Activated B cell treated with CpG ODN at 0.5 μM for 24 hours (primary cell): ENCODE measurements at regions of chr1 and their contacts with region 1.

Region 1: DNA sequence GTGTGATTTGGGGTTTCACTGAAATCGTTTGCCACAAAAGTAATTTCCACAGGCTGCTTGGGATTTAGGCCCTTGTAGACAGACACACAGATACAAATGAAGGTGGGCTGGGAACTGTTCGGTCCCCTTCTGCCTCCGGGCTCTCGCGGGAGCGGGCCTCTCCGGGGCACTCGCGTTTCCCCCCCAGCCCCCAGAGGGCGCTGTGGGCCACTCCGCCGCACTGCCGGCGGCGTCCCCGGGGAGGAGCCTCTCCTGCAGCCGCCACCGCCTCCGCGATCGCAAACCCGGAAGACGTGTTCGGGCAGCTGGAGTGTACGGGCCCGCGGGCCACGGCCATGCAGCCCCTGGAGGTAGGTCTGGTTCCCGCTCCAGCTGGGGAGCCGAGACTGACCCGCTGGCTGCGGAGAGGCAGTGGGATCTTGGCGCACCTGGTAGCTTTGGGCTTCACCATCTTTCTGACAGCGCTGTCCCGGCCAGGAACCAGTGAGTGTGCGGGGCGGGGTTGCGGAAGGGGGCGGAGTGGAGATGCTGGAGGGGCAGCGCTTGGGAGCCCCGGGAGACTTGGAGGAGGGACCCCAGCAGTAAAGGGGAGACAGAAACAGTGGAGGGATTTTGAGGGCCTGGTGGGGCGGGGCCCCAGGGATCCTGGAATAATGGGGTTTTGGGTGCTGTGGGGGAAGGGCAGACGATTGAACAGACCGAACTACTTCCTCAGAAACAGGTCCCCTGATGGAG is at the start of gene CYB561D1:
- DNase-seq: peak; percentile 95
- ATAC-seq: peak; percentile 89
- H3K4me3 Mint-ChIP-seq: peak within 1 kb of the TSS; percentile 98
- H3K27ac Mint-ChIP-seq: peak within 1 kb of the TSS; percentile 91
- H3K4me1 Mint-ChIP-seq: peaks cover 43% of the 10 kb centered on the region
- H3K27me3 Mint-ChIP-seq: no peaks in the 10 kb centered on the region
- CTCF ChIP-seq: peak; percentile 81
- total RNA-seq, gene CYB561D1: 17.1 and 18.1 TPM in 2 replicates

Region 2: DNA sequence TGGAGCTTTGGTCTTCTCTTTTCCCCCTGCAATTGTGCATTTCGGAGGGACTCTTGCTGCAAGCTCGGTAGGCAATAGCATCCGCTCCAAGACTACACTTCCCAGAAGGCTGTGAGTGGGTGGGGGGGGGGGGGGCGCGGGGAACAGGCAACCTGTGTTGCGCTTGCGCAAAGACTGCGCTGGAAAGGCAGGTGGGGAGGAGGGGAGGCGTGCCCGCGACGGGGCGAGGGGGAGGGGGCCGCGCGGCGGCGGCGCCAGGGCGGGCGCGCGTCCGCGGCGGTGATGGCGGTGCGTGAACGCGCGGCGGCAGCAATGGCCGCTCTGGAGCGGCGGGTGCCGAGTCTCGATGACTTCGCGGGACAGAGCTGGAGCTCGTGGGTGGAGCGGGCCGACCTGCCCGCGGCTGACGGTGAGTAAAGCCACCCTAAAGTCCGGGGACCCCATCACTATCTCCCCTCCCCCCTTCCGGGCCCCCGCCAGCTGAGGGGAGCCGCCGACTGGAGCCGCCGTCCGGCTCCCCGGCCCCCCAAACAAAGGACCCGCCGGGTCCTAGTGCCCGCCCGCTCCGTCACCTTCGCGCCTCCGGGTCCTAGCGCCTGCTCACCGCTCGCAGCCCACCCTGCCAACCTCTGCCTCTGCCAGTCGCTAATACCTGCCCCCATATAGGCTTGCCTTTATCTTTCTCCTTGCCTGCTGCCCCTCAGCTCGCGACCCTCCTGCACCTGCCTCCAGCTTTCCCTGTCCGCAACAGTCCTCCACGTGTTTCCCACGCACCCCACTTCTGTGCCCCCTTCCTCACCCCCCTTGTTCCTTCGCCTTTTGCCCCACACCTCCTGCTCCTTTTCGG is 10.1 kb before region 1 on chr1 and contains the start of gene ATXN7L2:
- CTCF ChIA-PET with region 1: interaction called, 31 read pairs
- POLR2A ChIA-PET with region 1: interaction called, 29 read pairs
- intact Hi-C with region 1: loop called (anchors 1 kb)
- DNase-seq: peak; percentile 90
- ATAC-seq: peak; percentile 79
- H3K4me3 Mint-ChIP-seq: peak within 1 kb of the TSS; percentile 94
- H3K27ac Mint-ChIP-seq: peak within 1 kb of the TSS; percentile 91
- H3K4me1 Mint-ChIP-seq: peaks cover 27% of the 10 kb centered on the region
- H3K27me3 Mint-ChIP-seq: peaks cover 16% of the 10 kb centered on the region
- CTCF ChIP-seq: no peak
- total RNA-seq, gene ATXN7L2: 7.5 and 9.0 TPM in 2 replicates

Region 3: GRCh38 chr1:109509176-109510134 is 15.5 kb after region 1 on chr1 and contains the start of gene AMIGO1:
- CTCF ChIA-PET with region 1: interaction called, 7 read pairs
- POLR2A ChIA-PET with region 1: interaction called, 11 read pairs
- intact Hi-C with region 1: loop called (anchors 1 kb)
- DNase-seq: peak; percentile 63
- ATAC-seq: peak; percentile 80
- H3K4me3 Mint-ChIP-seq: peak within 1 kb of the TSS; percentile 87
- H3K27ac Mint-ChIP-seq: peak within 1 kb of the TSS; percentile 43
- H3K4me1 Mint-ChIP-seq: peaks cover 15% of the 10 kb centered on the region
- H3K27me3 Mint-ChIP-seq: peaks cover 10% of the 10 kb centered on the region
- CTCF ChIP-seq: no peak
- total RNA-seq, gene AMIGO1: 0.42 and 0.53 TPM in 2 replicates

Region 4: DNA sequence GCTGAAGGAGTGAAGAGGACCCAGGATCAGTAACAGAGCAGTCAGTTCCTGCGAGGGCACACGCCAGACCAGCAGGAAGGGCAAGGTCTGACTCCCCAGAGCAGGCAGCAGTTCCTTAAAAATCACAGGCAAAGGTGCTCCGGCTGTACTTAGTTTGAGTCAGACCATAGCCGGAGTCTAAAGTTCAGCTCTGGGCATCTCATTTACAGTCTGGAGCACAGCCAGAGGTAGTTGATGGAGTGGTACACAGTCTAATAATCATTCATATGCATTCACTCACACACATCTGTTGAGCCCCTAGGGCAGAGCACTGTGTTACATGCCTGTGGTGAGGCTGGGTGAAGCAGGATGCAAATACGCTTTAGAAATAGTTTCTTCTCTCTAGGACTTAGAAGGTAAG is 22.9 kb after region 1 on chr1:
- CTCF ChIA-PET with region 1: interaction called, 15 read pairs
- POLR2A ChIA-PET with region 1: interaction called, 11 read pairs
- intact Hi-C with region 1: no loop called
- DNase-seq: no peak
- ATAC-seq: no peak
- H3K4me3 Mint-ChIP-seq: no peak overlapping the region
- H3K27ac Mint-ChIP-seq: no peak overlapping the region
- H3K4me1 Mint-ChIP-seq: no peaks in the 10 kb centered on the region
- H3K27me3 Mint-ChIP-seq: peaks cover 9% of the 10 kb centered on the region
- CTCF ChIP-seq: no peak

Region 5: DNA sequence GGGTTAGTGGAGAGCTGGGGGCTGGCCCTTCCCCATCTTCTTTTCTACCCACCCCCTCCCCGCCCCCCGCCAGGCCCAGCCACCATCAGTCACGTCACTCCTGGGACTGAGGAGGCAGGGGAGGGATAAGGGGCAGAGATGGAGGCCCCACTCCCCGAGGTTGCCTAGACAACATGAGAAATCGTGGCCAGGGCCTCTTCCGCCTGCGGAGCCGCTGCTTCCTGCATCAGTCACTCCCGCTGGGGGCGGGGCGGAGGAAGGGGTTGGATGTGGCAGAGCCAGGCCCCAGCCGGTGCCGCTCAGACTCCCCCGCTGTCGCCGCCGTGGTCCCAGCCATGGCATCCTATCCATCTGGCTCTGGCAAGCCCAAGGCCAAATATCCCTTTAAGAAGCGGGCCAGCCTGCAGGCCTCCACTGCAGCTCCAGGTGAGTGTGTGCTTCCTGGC is 126.9 kb after region 1 on chr1:
- CTCF ChIA-PET with region 1: interaction called, 3 read pairs
- POLR2A ChIA-PET with region 1: no interaction called
- intact Hi-C with region 1: loop called (anchors 1 kb)
- DNase-seq: peak; percentile 80
- ATAC-seq: peak; percentile 67
- H3K4me3 Mint-ChIP-seq: peak overlapping the region; percentile 90
- H3K27ac Mint-ChIP-seq: peak overlapping the region; percentile 93
- H3K4me1 Mint-ChIP-seq: peaks cover 78% of the 10 kb centered on the region
- H3K27me3 Mint-ChIP-seq: no peaks in the 10 kb centered on the region
- CTCF ChIP-seq: no peak

Region 6: DNA sequence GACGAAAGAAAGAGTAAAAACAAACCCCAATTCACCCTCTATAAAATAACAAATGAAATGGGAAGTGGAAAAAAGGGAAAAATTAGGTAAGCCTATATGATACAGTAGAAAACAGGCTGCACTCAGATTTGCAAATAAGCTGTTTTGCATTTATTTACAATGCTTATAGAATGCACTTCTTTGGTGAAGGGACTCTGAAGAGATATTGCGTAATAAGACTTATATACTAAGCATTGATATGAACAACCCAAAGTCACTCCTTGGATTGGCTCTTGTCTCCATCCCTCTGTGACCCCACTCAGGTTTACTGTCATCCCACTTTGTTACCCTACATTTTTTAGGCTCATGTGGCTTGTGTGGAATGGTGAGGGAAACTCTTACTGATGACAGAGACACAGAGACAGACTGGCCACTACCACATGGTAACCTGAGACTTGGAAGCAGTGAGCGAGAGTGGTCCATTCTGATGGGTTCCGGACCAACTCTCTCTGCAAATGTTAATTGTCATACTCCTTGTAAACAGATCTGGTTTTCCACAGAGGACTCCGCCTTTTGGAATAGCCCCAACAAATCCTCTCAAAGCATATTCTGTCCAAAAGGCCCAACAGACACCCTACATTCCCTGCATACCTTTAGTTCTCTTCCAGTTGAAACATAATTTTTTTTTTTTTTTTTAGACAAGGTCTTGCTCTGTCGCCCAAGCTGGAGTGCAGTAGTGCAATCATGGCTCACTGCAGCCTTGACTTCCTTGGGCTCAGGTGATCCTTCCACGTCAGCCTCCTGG is 229.1 kb after region 1 on chr1:
- CTCF ChIA-PET with region 1: no interaction called
- POLR2A ChIA-PET with region 1: no interaction called
- intact Hi-C with region 1: no loop called
- DNase-seq: no peak
- ATAC-seq: no peak
- H3K4me3 Mint-ChIP-seq: no peak overlapping the region
- H3K27ac Mint-ChIP-seq: no peak overlapping the region
- H3K4me1 Mint-ChIP-seq: no peaks in the 10 kb centered on the region
- H3K27me3 Mint-ChIP-seq: peaks cover 8% of the 10 kb centered on the region
- CTCF ChIP-seq: no peak

Region 7: GRCh38 chr1:110176299-110176956 is 682.5 kb after region 1 on chr1:
- CTCF ChIA-PET with region 1: no interaction called
- POLR2A ChIA-PET with region 1: no interaction called
- intact Hi-C with region 1: no loop called
- DNase-seq: no peak
- ATAC-seq: no peak
- H3K4me3 Mint-ChIP-seq: no peak overlapping the region
- H3K27ac Mint-ChIP-seq: no peak overlapping the region
- H3K4me1 Mint-ChIP-seq: no peaks in the 10 kb centered on the region
- H3K27me3 Mint-ChIP-seq: peaks cover 16% of the 10 kb centered on the region
- CTCF ChIP-seq: no peak

Region 8: DNA sequence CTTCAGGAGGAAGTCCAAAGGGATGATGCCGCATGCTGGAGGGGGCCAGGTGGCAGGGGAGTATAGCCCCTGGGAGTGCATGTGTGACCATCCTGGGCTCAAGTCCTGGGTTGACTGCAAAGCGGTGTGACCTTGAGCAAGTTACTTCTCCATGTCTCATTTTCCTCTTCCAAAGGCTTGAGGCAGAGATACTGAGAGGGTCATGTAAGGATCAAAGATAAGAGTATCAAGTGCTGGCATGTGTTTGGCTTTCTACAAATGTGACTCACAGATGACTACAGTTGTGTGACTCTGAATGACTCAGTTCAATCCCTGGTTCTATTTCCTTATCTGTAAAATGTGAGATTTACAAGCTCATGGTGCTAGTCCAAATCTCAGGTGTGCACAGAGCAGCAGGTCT is 983.1 kb after region 1 on chr1:
- CTCF ChIA-PET with region 1: no interaction called
- POLR2A ChIA-PET with region 1: no interaction called
- intact Hi-C with region 1: no loop called
- DNase-seq: no peak
- ATAC-seq: no peak
- H3K4me3 Mint-ChIP-seq: no peak overlapping the region
- H3K27ac Mint-ChIP-seq: no peak overlapping the region
- H3K4me1 Mint-ChIP-seq: no peaks in the 10 kb centered on the region
- H3K27me3 Mint-ChIP-seq: peaks cover 31% of the 10 kb centered on the region
- CTCF ChIP-seq: no peak